ENCODE measurements at regions of chr11 and their contacts with region 1.

Region 1: DNA sequence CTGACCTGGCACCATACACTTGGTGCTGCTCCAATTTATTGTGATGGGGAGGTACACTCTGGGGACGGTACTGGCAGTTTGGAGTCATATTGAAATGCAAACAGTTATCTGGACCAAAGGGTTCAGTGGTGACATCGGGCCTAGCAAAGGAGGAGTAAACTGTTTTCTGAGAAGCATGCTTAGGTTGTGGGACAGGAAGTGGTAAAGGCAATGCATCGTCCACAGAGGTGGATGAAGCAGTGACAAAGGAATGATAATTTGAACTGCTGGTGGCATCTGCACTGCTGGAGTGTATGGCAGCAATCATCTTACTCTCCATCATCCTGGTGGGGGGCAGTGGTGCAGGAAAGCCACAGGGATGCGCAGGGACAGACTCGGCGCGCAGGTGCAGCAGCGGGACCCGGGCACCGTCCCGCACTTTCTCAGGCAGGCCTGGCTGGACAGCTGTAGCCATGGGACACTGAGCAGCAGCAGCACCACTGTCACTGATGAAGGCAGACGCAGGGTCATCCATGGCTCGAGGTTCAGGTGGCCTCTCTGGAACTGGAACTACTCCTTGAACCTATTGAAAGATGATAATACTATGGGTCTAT is 28.0 kb upstream of the TP53AIP1 start:
- DNase-seq: no peak
- ATAC-seq: no peak
- H3K4me3 ChIP-seq: no peak overlapping the region
- H3K4me3 Mint-ChIP-seq: no peak overlapping the region
- H3K27ac ChIP-seq: no peak overlapping the region
- H3K27ac Mint-ChIP-seq: no peak overlapping the region
- H3K4me1 ChIP-seq: peaks cover 6% of the 10 kb centered on the region
- H3K4me1 Mint-ChIP-seq: peaks cover 2% of the 10 kb centered on the region
- H3K27me3 ChIP-seq: no peaks in the 10 kb centered on the region
- H3K27me3 Mint-ChIP-seq: no peaks in the 10 kb centered on the region
- CTCF ChIP-seq: no peak

Region 2: GRCh38 chr11:127693686-127694085 is 1277.0 kb before region 1 on chr11:
- CTCF ChIA-PET with region 1: no interaction called
- POLR2A ChIA-PET with region 1: no interaction called
- intact Hi-C with region 1: loop called in 1 of 2 experiments (anchors 10 kb)
- DNase-seq: no peak
- ATAC-seq: no peak
- H3K4me3 ChIP-seq: no peak overlapping the region
- H3K4me3 Mint-ChIP-seq: no peak overlapping the region
- H3K27ac ChIP-seq: no peak overlapping the region
- H3K27ac Mint-ChIP-seq: no peak overlapping the region
- H3K4me1 ChIP-seq: no peaks in the 10 kb centered on the region
- H3K4me1 Mint-ChIP-seq: no peaks in the 10 kb centered on the region
- H3K27me3 ChIP-seq: no peaks in the 10 kb centered on the region
- H3K27me3 Mint-ChIP-seq: no peaks in the 10 kb centered on the region
- CTCF ChIP-seq: no peak

Region 3: DNA sequence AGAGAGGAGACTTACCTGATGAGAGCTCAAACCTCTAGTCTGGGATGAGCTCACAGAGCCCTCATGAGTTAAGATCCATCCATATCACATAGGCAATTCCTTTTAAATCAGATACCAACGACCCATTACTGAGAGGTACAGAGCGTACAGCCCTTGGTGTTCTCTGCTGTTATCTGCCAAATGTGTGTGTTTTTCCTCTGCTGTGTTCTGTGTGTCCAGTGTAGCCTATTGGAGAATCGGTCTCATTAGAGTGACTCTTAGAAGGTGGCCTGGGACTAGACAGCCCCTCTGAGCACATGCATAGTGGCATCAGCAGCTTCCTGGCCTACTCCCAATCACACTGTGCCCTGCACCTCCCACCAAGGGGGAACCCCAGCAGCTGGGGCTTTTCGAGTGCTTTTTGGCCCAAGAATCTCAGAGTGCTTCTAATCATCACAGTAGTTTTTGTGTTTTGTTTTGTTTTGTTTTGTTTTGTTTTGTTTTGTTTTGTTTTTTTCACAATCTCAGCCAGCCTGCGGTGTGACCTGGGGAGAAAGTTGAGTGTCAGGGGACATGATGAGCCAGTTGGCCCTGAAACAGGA is 53.5 kb before region 1 on chr11:
- CTCF ChIA-PET with region 1: no interaction called
- POLR2A ChIA-PET with region 1: no interaction called
- intact Hi-C with region 1: no loop called
- DNase-seq: no peak
- ATAC-seq: no peak
- H3K4me3 ChIP-seq: no peak overlapping the region
- H3K4me3 Mint-ChIP-seq: no peak overlapping the region
- H3K27ac ChIP-seq: no peak overlapping the region
- H3K27ac Mint-ChIP-seq: no peak overlapping the region
- H3K4me1 ChIP-seq: no peaks in the 10 kb centered on the region
- H3K4me1 Mint-ChIP-seq: no peaks in the 10 kb centered on the region
- H3K27me3 ChIP-seq: peaks cover 0 to 8% of the 10 kb centered on the region in 2 experiments
- H3K27me3 Mint-ChIP-seq: peaks cover 46% of the 10 kb centered on the region
- CTCF ChIP-seq: no peak

Region 4: GRCh38 chr11:129620237-129621104 is 649.8 kb after region 1 on chr11:
- CTCF ChIA-PET with region 1: no interaction called
- POLR2A ChIA-PET with region 1: no interaction called
- intact Hi-C with region 1: no loop called
- DNase-seq: no peak
- ATAC-seq: no peak
- H3K4me3 ChIP-seq: no peak overlapping the region
- H3K4me3 Mint-ChIP-seq: no peak overlapping the region
- H3K27ac ChIP-seq: no peak overlapping the region
- H3K27ac Mint-ChIP-seq: no peak overlapping the region
- H3K4me1 ChIP-seq: no peaks in the 10 kb centered on the region
- H3K4me1 Mint-ChIP-seq: no peaks in the 10 kb centered on the region
- H3K27me3 ChIP-seq: no peaks in the 10 kb centered on the region
- H3K27me3 Mint-ChIP-seq: peaks cover 23% of the 10 kb centered on the region
- CTCF ChIP-seq: no peak